Cardiac septum (tissue), 1 donor: ENCODE measurements at regions of chr1 and their contacts with region 1.

Region 1: GRCh38 chr1:160427625-160428024 is 27.3 kb downstream of the VANGL2 start:
- DNase-seq: no peak

Region 2: DNA sequence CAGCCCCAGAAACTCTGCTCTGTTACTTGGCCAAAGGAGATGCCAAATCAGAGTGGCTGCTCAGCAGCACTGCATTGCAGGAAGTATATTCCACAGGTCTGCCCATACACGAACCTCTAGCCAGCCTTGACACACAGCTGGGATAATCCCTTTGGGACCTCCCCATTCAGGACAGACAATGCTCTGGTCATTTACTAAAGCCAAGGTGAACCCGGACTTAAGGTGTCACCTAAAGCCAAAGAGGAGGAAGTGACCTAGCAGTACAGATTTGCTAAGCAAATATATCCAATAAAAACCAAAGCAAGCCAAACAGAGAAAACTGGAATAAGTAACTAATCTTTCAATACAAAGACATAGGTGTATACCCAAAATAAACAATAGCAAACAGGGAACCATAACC is 112.3 kb before region 1 on chr1:
- intact Hi-C with region 1: no loop called
- DNase-seq: no peak

Region 3: DNA sequence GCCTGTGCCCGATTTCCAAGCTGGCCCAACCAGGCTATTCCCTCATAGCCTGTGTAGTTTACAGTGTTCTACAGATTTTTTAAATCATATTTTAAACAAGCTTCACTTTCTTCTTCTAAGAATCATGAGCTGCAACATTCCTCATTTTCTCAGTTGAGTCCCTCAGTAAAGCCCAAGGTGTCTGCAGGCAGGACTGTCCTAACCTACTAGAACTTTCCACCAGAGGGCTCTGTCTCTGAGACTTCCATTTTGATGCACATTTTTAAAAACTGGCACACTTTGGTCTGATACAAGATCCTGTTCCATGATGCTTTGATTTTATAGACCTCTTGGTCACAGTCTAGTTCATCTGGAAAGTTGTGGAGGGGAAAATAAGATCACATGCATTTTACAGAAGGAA is 117.0 kb after region 1 on chr1:
- intact Hi-C with region 1: no loop called
- DNase-seq: no peak

Region 4: GRCh38 chr1:160607011-160607671 is 179.5 kb after region 1 on chr1:
- intact Hi-C with region 1: loop called (anchors 2 kb)
- DNase-seq: no peak